Transverse colon (tissue), 4 donors: ENCODE measurements at regions of chr6 and their contacts with region 1.

Region 1: DNA sequence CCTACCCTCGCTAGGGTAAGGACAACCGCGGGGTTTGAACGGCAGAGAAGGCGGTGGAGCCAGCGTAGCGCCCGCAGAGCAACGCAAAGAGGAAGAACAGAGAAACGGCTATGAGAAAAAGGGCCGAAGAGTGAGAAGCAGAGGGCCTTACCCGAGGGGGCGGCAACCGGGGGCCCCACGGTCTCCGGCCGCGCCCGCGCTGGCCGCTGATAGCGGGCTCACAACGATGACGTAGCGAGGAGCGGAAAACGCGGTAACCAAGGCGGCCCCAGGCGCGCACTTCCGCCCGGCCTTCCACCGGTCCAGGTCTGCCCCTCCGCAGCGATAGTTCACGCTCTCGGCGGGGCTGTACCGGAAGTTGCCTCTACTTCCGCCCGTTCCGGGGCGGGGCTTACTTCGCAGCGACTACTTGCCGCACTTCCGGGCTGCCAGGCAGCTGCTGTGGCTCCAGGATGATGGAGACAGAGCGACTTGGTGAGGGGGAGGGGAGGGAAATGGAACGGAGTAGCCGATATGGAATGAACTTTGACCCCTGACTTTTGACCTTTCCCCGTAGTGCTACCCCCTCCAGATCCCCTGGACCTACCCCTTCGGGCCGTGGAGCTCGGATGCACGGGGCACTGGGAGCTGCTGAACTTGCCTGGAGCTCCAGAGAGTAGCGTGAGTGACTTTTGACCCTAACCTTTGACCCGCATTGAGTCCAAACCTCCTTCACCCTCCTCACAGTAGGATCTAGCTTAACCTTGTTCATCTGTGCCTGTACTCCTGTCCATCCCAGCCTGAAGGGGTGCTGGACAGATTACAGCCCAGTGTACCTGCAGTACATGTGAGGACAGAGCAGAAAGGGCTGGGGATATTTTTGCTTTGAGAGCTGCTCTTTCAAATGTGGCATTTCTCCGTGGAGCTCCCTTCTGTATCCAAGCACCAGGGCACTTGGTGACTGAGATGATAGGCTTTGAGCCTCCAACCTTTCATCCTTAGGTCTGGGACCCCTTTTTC is at the starts of genes NELFE and SKIC2:
- DNase-seq: peak; percentile 99
- H3K4me3 ChIP-seq: peak within 1 kb of the TSS; percentile 62 to 94 (median 80)
- H3K27ac ChIP-seq: peak within 1 kb of the TSS; percentile 83 to 94 (median 86)
- H3K4me1 ChIP-seq: peaks cover 11 to 23% (median 19%) of the 10 kb centered on the region in 4 donors
- H3K27me3 ChIP-seq: no peaks in the 10 kb centered on the region
- CTCF ChIP-seq: no peak
- EP300 ChIP-seq: no peak
- POLR2A ChIP-seq: peak; percentile 80
- total RNA-seq, gene NELFE: 59.2 to 114 (median 88.0) TPM
- total RNA-seq, gene SKIC2: 52.8 to 173 (median 71.3) TPM

Region 2: DNA sequence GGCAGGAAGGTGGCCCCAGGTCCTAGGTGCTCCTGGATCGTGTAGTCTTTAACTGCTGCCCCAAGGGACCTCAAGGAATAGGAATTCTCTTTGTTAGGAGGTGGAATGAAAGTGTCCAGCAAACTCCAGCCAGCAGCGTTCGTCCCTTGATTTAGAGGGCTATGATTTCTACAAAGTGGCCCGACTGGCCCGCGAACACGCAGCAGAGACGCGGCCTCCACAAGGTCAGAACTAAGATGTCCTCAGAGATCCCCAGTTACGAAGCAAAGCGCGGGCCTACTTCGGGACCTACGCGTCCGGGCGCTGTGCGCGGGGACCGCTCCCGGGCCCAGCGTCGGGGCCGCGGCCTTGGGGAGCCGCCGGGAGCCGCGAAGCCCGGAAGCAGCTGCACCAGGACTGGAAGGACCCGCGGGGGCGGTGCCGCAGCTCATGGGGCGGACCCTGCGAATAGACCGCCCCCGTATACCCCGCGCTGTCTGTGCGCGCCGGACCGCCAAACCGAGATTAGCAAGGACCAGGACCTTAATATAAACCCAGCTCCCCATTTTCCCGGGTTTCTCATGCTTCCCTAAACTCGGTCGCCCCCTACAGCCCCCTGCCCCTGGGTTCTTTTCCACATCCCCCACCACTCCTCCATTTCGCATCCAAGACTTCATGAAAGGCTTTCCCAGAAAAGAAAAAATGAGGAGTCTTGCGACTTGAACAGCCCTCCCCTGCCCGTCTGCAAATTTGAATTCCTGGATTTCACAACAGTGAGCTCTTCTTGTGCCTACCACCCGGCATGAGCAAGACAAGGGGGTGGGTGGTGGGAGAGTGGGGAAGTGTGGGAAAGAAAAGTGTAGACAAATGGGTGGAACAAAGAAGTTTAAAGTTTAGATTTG is 298.4 kb before region 1 on chr6 and contains the start of gene C6orf47:
- in situ Hi-C with region 1: no loop called
- intact Hi-C with region 1: no loop called
- DNase-seq: peak; percentile 91
- H3K4me3 ChIP-seq: peak within 1 kb of the TSS; percentile 63 to 87 (median 76)
- H3K27ac ChIP-seq: peak within 1 kb of the TSS; percentile 88 to 95 (median 90)
- H3K4me1 ChIP-seq: peaks cover 30 to 75% (median 44%) of the 10 kb centered on the region in 4 donors
- H3K27me3 ChIP-seq: no peaks in the 10 kb centered on the region
- CTCF ChIP-seq: no peak
- EP300 ChIP-seq: no peak
- POLR2A ChIP-seq: peak; percentile 95
- total RNA-seq, gene C6orf47: 18.7 to 45.7 (median 25.2) TPM

Region 3: DNA sequence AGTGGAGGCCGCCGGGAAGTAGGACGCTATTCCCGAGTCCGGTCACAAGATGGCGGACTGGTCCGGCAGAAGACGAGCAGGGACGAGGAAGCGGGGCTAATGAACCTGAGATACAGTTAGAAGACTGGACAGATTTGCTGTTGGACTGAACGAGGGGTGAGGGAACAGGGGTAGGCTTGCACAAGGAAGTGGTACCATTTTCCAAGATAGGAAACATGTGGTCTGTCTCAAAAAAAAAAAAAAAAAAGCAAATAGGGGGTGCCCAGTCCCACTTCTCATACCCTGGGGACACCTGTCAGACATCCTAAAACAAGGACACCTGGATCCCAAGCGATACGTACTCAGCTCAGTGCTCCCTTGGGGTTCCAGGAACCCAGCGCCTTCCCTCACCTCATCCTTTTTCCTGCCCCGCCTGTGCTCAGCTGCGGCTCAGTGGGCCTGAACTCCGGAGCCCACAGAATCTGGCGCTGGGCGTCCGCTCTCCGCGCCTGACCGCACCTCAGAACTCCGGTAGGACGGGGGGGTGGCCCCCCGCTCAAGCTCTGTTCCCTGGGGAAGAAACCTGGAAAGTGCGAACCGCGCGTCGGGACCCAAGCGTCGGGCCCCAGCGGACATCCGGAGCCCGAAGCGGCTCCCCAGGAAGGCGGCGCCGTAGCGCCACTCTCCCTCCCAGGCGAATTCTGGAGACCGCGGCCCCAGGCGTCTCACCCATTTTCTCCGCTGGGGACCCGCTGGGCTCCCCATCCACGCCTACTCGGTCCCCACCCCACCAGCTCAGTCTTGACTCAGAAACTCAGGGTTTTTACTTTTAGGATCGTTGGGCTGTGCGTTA is 278.0 kb before region 1 on chr6 and contains the start of gene LY6G5C:
- in situ Hi-C with region 1: loop called in 1 of 4 experiments (anchors 10 kb)
- intact Hi-C with region 1: no loop called
- DNase-seq: peak; percentile 89
- H3K4me3 ChIP-seq: peak within 1 kb of the TSS; percentile 42 to 63 (median 43)
- H3K27ac ChIP-seq: peak within 1 kb of the TSS; percentile 70 to 85 (median 78)
- H3K4me1 ChIP-seq: peaks cover 5 to 26% (median 11%) of the 10 kb centered on the region in 4 donors
- H3K27me3 ChIP-seq: no peaks in the 10 kb centered on the region
- CTCF ChIP-seq: peak; percentile 52 to 78 (median 69)
- EP300 ChIP-seq: no peak
- POLR2A ChIP-seq: peak; percentile 31
- total RNA-seq, gene LY6G5C: 0.95 to 2.2 TPM in 2 of 4 donors, not detected in the others

Region 4: DNA sequence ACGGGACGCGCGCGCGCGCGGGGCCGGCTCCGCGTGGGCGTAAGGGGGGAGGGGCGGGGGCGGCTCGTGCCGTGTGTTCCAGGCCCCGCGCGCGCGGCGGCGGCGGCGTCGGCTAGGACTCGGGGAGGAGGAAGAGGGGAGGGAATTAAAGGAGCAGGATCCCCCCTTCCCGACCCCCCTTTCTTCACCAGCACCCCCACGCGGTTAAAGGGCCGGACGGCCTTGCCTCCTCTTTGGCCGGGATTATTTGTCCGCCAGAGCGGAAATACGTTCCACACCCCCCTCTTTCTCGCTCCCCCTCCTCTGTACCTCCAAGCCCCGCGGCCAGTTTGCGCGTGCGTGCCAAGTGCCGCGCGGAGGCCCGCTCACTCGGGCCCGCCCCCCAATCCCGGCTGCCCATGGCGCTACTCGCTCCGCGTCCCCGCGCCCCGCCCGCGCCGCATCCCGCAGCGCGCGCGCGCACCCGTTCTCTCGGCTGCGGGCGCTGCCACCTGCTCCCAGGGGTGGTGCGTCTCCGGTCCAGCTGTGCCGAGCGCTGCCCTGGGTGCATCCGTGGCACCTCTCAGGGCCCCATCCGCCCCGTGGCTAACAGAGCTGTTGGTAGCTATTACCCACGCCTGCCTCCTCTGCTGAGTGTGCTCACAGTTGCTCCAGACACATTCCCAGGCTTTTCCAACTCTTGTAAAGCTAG is 56.9 kb before region 1 on chr6 and contains the start of gene ZBTB12:
- in situ Hi-C with region 1: loop called in 1 of 4 experiments (anchors 10 kb)
- intact Hi-C with region 1: loop called (anchors 5 kb)
- DNase-seq: peak; percentile 94
- H3K4me3 ChIP-seq: peak within 1 kb of the TSS; percentile 51 to 72 (median 60)
- H3K27ac ChIP-seq: peak within 1 kb of the TSS; percentile 80 to 92 (median 87)
- H3K4me1 ChIP-seq: peaks cover 8 to 38% (median 24%) of the 10 kb centered on the region in 4 donors
- H3K27me3 ChIP-seq: no peaks in the 10 kb centered on the region
- CTCF ChIP-seq: peak in 1 of 5 experiments; percentile 36
- EP300 ChIP-seq: no peak
- POLR2A ChIP-seq: peak; percentile 60
- total RNA-seq, gene ZBTB12: 0.14 to 1.3 (median 0.77) TPM

Region 5: DNA sequence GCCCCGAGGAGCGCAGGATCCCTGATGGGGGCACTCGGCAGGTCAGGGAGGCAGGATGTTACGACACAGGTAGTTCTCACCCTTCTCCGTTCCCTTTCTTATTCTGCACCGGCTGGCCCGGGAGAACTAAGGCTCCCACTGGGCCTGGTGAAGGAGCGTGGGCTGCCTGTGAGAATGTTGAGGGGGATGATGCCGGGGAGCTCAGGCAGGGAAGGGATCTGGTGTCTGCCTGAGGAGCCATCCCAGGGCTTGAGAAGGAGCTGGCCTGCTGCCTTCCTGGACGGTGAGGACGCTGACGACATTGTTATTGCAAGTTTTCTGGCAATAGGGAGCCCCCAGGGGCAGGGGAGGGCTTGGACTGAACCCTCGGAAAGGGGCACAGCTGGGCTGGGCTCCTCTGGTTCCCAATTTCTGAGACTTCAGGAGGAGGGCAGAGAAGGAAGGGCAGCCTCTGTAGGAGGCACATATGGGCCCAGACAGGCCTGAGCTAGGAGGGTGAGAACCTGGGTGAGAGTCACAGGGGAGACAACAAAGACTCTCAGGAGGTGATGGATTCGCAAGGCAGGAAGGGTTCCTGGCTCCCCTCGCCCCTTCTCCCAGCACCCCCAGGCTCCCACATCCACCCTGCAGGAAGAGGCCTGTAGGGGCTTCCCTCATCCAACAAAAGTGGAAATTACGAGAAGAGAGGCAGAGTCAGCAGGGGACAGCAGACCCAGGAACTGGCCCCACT is 111.9 kb after region 1 on chr6:
- in situ Hi-C with region 1: loop called in 2 of 4 experiments (anchors 25 kb)
- intact Hi-C with region 1: no loop called
- DNase-seq: no peak
- H3K4me3 ChIP-seq: no peak overlapping the region
- H3K27ac ChIP-seq: peak overlapping the region; percentile 6 to 62 (median 34)
- H3K4me1 ChIP-seq: no peaks in the 10 kb centered on the region
- H3K27me3 ChIP-seq: no peaks in the 10 kb centered on the region
- CTCF ChIP-seq: no peak
- EP300 ChIP-seq: no peak
- POLR2A ChIP-seq: no peak